Caco-2 (cell line): ENCODE measurements at regions of chr3 and their contacts with region 1.

Region 1: DNA sequence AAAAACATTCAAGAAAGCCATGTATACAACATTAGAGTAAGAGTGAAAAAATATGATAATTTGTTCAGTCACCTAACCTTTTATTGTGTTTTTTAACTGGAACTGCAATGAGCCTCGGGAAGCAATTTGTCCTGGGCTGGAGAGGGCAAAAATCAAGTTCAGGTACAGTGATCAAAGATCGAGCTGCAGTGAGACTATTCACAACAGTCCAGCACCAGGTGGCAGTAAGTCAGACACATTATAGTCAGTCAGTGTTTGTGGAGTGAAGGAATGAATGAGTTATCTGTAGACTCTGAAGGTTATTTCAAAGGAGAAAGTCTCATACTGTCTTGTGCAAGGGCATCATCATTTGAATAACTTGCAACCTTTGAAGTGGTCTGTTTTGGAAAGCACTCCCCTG is 116.6 kb downstream of the CHDH start:
- DNase-seq: peak in 1 of 2 experiments; percentile 20
- H3K4me3 ChIP-seq: no peak overlapping the region
- H3K4me3 Mint-ChIP-seq: no peak overlapping the region
- H3K27ac Mint-ChIP-seq: no peak overlapping the region
- H3K4me1 ChIP-seq: no peaks in the 10 kb centered on the region
- H3K4me1 Mint-ChIP-seq: no peaks in the 10 kb centered on the region
- H3K27me3 ChIP-seq: no peaks in the 10 kb centered on the region
- H3K27me3 Mint-ChIP-seq: no peaks in the 10 kb centered on the region
- CTCF ChIP-seq: peak in 1 of 2 experiments; percentile 37

Region 2: GRCh38 chr3:53804821-53805788 is 75.5 kb after region 1 on chr3:
- CTCF ChIA-PET with region 1: no interaction called
- POLR2A ChIA-PET with region 1: no interaction called
- intact Hi-C with region 1: loop called (anchors 2 kb)
- DNase-seq: peak; percentile 47 to 73
- H3K4me3 ChIP-seq: no peak overlapping the region
- H3K4me3 Mint-ChIP-seq: no peak overlapping the region
- H3K27ac Mint-ChIP-seq: peak overlapping the region; percentile 37
- H3K4me1 ChIP-seq: peaks cover 25% of the 10 kb centered on the region
- H3K4me1 Mint-ChIP-seq: peaks cover 20% of the 10 kb centered on the region
- H3K27me3 ChIP-seq: no peaks in the 10 kb centered on the region
- H3K27me3 Mint-ChIP-seq: no peaks in the 10 kb centered on the region
- CTCF ChIP-seq: no peak